Gastrocnemius medialis (tissue), 4 donors: ENCODE measurements at regions of chr3 and their contacts with region 1.

Region 1: GRCh38 chr3:184250167-184250828 is 826 bp downstream of the EEF1AKMT4 start:
- DNase-seq: peak; percentile 59 to 85
- ATAC-seq: peak; percentile 80 to 82
- H3K4me3 ChIP-seq: peak overlapping the region; percentile 85 to 95 (median 90)
- H3K27ac ChIP-seq: peak overlapping the region; percentile 91 to 95 (median 94)
- H3K4me1 ChIP-seq: peaks cover 17 to 20% of the 10 kb centered on the region in 2 donors
- H3K27me3 ChIP-seq: no peaks in the 10 kb centered on the region
- CTCF ChIP-seq: peak; percentile 81 to 94 (median 88)
- POLR2A ChIP-seq: no peak

Region 2: DNA sequence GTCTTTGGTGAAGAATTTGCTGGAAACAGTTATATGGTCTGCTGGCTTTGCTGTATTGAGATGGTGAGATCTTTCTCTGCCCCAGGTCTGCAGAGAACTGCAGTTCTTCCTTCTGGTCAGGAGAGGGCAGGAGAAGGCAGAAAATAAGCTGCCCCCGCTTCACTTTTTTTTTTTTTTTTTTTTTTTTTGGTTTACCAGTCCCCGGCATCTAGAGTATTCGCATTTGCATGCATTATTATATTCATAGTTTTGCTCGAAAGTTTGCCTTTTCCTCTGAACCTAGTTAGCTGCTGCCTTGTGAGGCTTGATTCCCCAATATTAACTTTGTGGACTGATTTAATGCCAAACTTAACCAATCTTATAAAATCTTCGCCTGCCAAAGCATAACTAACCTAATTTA is 355.0 kb before region 1 on chr3:
- in situ Hi-C with region 1: loop called in 2 of 4 experiments (anchors 25 kb)
- intact Hi-C with region 1: loop called (anchors 2 kb)
- DNase-seq: no peak
- ATAC-seq: peak; percentile 81 to 83
- H3K4me3 ChIP-seq: no peak overlapping the region
- H3K27ac ChIP-seq: no peak overlapping the region
- H3K4me1 ChIP-seq: peaks cover 0 to 4% of the 10 kb centered on the region in 2 donors
- H3K27me3 ChIP-seq: no peaks in the 10 kb centered on the region
- CTCF ChIP-seq: peak; percentile 69 to 79 (median 76)
- POLR2A ChIP-seq: no peak

Region 3: DNA sequence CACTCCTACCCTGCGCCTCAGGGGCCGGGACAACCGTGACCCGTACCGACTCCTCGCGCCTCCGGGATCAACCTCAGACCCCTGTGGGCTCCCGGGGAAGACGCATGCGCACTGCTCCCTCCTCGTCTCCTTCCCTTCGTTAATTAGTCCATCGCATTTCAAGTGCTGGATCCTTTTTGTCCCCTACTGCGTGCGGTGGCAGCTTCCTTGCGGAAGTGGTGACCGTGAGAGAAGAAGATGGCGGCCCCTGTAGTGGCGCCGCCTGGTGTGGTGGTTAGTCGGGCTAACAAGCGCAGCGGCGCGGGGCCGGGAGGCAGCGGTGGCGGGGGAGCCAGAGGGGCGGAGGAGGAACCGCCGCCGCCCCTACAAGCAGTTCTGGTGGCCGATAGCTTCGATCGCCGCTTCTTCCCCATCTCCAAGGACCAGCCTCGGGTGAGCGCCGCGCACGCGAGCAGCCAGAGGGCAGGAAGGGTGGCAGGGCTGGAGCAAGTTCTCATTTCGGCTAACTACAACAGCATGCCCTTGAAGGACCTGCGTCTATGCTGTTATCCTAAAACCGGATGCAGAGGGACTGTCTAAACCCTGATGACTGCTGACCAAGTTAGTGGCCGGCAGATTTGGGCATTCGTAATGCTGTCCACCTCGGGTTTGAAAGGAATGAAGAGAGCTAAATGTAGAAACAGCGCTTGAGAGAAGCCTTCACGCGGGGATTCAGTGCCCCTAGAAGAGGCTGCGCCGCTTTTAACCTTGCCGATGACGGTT is 115.0 kb before region 1 on chr3 and contains the start of gene EIF2B5:
- in situ Hi-C with region 1: loop called in 2 of 4 experiments (anchors 10 to 25 kb)
- intact Hi-C with region 1: loop called (anchors 1 kb)
- DNase-seq: peak; percentile 90 to 91
- ATAC-seq: peak; percentile 89 to 94
- H3K4me3 ChIP-seq: peak within 1 kb of the TSS; percentile 65 to 97 (median 80)
- H3K27ac ChIP-seq: peak within 1 kb of the TSS; percentile 88 to 97 (median 93)
- H3K4me1 ChIP-seq: peaks cover 15 to 25% of the 10 kb centered on the region in 2 donors
- H3K27me3 ChIP-seq: no peaks in the 10 kb centered on the region
- CTCF ChIP-seq: peak in 4 of 5 experiments; percentile 32 to 55 (median 47)
- POLR2A ChIP-seq: peak; percentile 70 to 72
- total RNA-seq, gene EIF2B5: 42.6 to 56.8 (median 53.4) TPM

Region 4: DNA sequence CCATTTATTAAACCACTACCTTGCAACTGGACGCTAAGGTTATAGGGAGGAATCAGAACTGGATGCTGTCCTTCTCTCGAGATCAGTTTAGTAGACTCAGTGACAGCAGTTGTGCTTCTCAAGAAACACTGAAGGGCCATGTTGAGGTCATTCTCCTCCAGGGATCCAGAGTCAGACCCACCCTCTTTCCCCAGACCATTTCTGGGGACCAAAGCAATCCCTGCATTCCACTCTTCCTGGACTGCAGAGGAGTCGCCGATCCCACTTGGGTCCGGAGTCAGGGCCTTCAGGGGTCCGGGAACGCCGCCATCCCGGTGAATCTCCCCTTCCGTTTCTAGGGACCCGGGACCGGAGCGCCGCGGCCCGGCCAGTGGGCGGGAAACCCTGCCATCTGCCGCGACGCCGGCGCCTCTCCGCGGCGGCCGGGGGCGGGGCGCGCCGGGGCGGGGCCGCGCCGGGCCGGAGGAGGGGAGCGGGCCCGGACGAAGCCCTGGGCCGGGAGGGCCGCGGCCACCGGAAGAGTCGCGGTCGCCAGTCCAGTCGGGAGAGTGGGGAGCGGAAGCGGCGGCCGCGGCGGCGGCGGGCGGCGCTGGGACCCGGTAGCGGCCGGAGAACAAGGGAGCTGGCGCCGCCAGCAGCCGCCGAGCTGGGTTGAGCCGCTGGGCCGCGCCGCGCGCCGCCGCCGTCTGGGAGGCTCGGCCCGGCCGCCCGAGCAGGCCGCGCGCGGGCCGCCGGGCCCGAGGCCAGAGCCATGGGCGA is 95.2 kb before region 1 on chr3 and contains the start of gene DVL3:
- in situ Hi-C with region 1: no loop called
- intact Hi-C with region 1: loop called (anchors 5 kb)
- DNase-seq: peak; percentile 51 to 71
- ATAC-seq: peak; percentile 84 to 90
- H3K4me3 ChIP-seq: peak within 1 kb of the TSS; percentile 83 to 99 (median 94)
- H3K27ac ChIP-seq: peak within 1 kb of the TSS; percentile 89 to 97 (median 94)
- H3K4me1 ChIP-seq: peaks cover 42 to 53% of the 10 kb centered on the region in 2 donors
- H3K27me3 ChIP-seq: no peaks in the 10 kb centered on the region
- CTCF ChIP-seq: no peak
- POLR2A ChIP-seq: peak; percentile 52 to 78
- total RNA-seq, gene DVL3: 36.5 to 58.1 (median 48.0) TPM

Region 5: GRCh38 chr3:184185461-184186308 is 64.6 kb before region 1 on chr3 and contains the start of gene ABCF3:
- in situ Hi-C with region 1: no loop called
- intact Hi-C with region 1: loop called (anchors 1 kb)
- DNase-seq: peak; percentile 99
- ATAC-seq: peak; percentile 92 to 97
- H3K4me3 ChIP-seq: peak within 1 kb of the TSS; percentile 78 to 97 (median 90)
- H3K27ac ChIP-seq: peak within 1 kb of the TSS; percentile 89 to 97 (median 96)
- H3K4me1 ChIP-seq: peaks cover 18 to 21% of the 10 kb centered on the region in 2 donors
- H3K27me3 ChIP-seq: no peaks in the 10 kb centered on the region
- CTCF ChIP-seq: no peak
- POLR2A ChIP-seq: peak; percentile 73 to 91
- total RNA-seq, gene ABCF3: 52.6 to 96.4 (median 63.2) TPM

Region 6: GRCh38 chr3:184218814-184219213 is 31.5 kb before region 1 on chr3:
- in situ Hi-C with region 1: no loop called
- intact Hi-C with region 1: no loop called
- DNase-seq: no peak
- ATAC-seq: no peak
- H3K4me3 ChIP-seq: no peak overlapping the region
- H3K27ac ChIP-seq: no peak overlapping the region
- H3K4me1 ChIP-seq: no peaks in the 10 kb centered on the region
- H3K27me3 ChIP-seq: peaks cover 0 to 7% (median 3%) of the 10 kb centered on the region in 3 donors
- CTCF ChIP-seq: no peak
- POLR2A ChIP-seq: no peak

Region 7: DNA sequence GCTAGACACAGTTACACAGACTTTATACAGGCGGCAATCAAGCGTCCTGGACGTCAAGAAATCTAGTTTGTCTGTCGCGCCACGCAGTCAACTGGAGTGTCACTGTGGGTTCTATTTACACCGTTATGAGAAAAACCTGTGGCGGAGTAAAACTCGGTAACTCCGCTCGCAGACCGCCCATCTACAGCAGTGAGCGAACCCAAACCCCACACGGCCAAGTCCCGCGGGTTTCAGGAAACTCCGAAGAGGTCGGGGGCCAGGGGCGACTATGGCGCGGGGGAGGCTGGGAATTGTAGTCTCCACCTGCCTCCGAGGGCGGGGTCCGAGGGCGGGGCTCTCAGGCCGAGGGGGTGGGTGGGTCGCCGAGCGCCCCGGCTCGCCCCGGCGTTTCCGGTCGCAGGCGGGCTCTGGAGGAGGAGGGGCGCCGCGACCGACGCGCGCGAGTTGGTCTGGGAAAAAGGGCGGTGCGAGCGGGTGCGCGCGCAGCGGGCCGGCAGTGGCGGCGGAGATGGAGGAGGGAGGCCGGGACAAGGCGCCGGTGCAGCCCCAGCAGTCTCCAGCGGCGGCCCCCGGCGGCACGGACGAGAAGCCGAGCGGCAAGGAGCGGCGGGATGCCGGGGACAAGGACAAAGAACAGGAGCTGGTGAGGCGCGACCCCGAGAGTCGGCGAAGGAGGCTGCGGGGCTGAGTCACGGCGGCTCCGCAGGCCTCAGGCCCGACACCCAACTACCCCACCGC is 48.6 kb after region 1 on chr3 and contains the start of gene PSMD2:
- in situ Hi-C with region 1: no loop called
- intact Hi-C with region 1: loop called (anchors 1 kb)
- DNase-seq: peak; percentile 97
- ATAC-seq: peak; percentile 93 to 96
- H3K4me3 ChIP-seq: peak within 1 kb of the TSS; percentile 70 to 93 (median 76)
- H3K27ac ChIP-seq: peak within 1 kb of the TSS; percentile 81 to 93 (median 86)
- H3K4me1 ChIP-seq: peaks cover 14 to 18% of the 10 kb centered on the region in 2 donors
- H3K27me3 ChIP-seq: no peaks in the 10 kb centered on the region
- CTCF ChIP-seq: peak in 1 of 5 experiments; percentile 18
- POLR2A ChIP-seq: peak; percentile 94 to 98
- total RNA-seq, gene PSMD2: 560 to 831 (median 720) TPM

Region 8: GRCh38 chr3:184362668-184363540 is 112.6 kb after region 1 on chr3:
- in situ Hi-C with region 1: no loop called
- intact Hi-C with region 1: loop called (anchors 2 kb)
- DNase-seq: peak; percentile 94 to 96
- ATAC-seq: peak; percentile 86 to 87
- H3K4me3 ChIP-seq: peak overlapping the region; percentile 58 to 94 (median 76)
- H3K27ac ChIP-seq: peak overlapping the region; percentile 91 to 100 (median 95)
- H3K4me1 ChIP-seq: peaks cover 17 to 23% of the 10 kb centered on the region in 2 donors
- H3K27me3 ChIP-seq: no peaks in the 10 kb centered on the region
- CTCF ChIP-seq: peak in 4 of 5 experiments; percentile 21 to 72 (median 55)
- POLR2A ChIP-seq: peak; percentile 82 to 88